Mammary epithelial cell (primary cell): ENCODE measurements at regions of chr16 and their contacts with region 1.

Region 1: GRCh38 chr16:74563828-74564263 is 43.1 kb downstream of the GLG1 start:
- DNase-seq: peak; percentile 50
- H3K4me3 ChIP-seq: no peak overlapping the region
- H3K27ac ChIP-seq: no peak overlapping the region
- H3K4me1 ChIP-seq: peaks cover 14% of the 10 kb centered on the region
- H3K27me3 ChIP-seq: no peaks in the 10 kb centered on the region
- CTCF ChIP-seq: peak in 1 of 2 donors; percentile 3

Region 2: GRCh38 chr16:74501484-74502479 is 62.1 kb before region 1 on chr16:
- CTCF ChIA-PET with region 1: no interaction called
- dilution Hi-C with region 1: loop called (anchors 5 kb)
- in situ Hi-C with region 1: no loop called
- intact Hi-C with region 1: no loop called
- DNase-seq: no peak
- H3K4me3 ChIP-seq: no peak overlapping the region
- H3K27ac ChIP-seq: no peak overlapping the region
- H3K4me1 ChIP-seq: no peaks in the 10 kb centered on the region
- H3K27me3 ChIP-seq: no peaks in the 10 kb centered on the region
- CTCF ChIP-seq: no peak